ENCODE measurements at regions of chr1 and their contacts with region 1.

Region 1: GRCh38 chr1:24635195-24635843 is 7.8 kb upstream of the SRRM1 start:
- DNase-seq: no peak
- ATAC-seq: peak; percentile 68

Region 2: DNA sequence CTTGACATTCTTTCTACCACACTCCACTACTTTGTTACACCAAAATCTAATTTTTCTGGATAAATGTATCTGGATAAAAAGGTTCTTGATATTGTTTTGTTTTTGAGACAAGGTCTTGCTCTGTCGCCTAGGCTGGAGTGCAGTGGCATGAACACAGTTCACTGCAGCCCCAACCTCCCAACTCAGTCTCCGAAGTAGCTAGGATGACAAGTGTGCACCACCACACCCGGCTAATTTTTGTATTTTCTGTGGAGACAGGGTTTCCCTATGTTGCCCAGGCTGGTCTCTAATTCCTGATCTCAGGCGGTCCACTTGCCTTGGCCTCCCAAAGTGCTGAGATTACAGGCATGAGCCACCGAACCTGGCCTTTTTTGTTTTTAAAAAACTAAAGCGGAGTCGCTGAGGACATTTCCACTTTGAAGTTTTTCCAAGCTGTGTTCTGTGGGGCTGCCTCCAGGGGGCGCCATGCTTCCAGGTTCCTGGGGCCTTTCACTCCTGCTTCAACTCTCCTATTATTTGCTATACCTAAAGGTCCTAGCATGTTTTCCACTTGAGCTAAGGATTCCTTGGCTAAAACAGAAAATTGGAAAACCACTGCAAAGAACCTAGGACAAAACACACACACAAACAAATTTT is 93.5 kb before region 1 on chr1:
- intact Hi-C with region 1: loop called (anchors 2 kb)
- DNase-seq: no peak
- ATAC-seq: peak; percentile 38

Region 3: GRCh38 chr1:24705260-24706073 is 70.1 kb after region 1 on chr1:
- intact Hi-C with region 1: no loop called
- DNase-seq: peak; percentile 91
- ATAC-seq: peak; percentile 95

Region 4: GRCh38 chr1:24946861-24947658 is 311.7 kb after region 1 on chr1:
- intact Hi-C with region 1: no loop called
- DNase-seq: peak; percentile 22
- ATAC-seq: no peak